ENCODE measurements at regions of chr1 and their contacts with region 1.

Region 1: GRCh38 chr1:222739465-222739864 is 2.5 kb downstream of the FAM177B start:
- DNase-seq: no peak
- ATAC-seq: peak; percentile 40
- H3K4me3 Mint-ChIP-seq: no peak overlapping the region
- H3K27ac Mint-ChIP-seq: no peak overlapping the region
- H3K4me1 Mint-ChIP-seq: peaks cover 43% of the 10 kb centered on the region
- H3K27me3 Mint-ChIP-seq: no peaks in the 10 kb centered on the region
- CTCF ChIP-seq: no peak

Region 2: DNA sequence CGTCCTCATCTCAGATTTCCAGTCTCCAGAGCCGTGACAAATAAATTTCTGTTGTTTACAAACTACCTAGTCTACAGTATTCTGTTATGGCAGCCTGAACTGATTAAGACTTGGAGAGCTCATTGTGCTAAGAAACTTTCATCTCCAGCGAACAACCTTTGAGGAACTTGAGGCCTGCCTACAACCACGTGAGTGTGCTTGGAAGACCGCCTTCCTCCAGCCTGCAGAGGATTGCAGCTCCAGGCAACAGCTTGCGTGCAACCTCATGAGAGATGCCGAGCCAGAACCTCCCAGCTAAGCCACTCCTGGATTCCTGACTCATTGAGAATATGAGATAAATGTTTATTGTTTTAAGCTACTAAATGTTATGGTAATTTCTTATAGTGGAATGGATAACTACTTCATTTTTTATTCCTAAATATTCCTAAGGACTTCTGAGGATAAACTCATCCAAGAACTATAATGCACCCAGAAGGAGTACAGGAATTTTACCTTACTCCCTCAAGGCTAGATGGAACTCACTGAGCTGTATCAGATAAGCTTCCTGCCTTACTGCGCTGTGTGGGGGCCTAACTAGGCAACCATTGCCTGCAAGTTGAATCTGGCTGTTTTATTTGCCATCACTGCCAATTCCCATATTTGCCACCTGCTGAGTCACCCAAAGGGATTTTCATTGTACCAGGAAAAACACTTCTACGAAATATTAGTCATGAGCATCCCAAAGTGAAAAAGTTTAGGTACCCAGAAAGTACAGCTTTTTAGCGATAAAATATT is 15.1 kb after region 1 on chr1:
- CTCF ChIA-PET with region 1: interaction called, 19 read pairs
- POLR2A ChIA-PET with region 1: interaction called, 16 read pairs
- intact Hi-C with region 1: no loop called
- DNase-seq: no peak
- ATAC-seq: no peak
- H3K4me3 Mint-ChIP-seq: no peak overlapping the region
- H3K27ac Mint-ChIP-seq: peak overlapping the region; percentile 61
- H3K4me1 Mint-ChIP-seq: peaks cover 65% of the 10 kb centered on the region
- H3K27me3 Mint-ChIP-seq: no peaks in the 10 kb centered on the region
- CTCF ChIP-seq: no peak

Region 3: DNA sequence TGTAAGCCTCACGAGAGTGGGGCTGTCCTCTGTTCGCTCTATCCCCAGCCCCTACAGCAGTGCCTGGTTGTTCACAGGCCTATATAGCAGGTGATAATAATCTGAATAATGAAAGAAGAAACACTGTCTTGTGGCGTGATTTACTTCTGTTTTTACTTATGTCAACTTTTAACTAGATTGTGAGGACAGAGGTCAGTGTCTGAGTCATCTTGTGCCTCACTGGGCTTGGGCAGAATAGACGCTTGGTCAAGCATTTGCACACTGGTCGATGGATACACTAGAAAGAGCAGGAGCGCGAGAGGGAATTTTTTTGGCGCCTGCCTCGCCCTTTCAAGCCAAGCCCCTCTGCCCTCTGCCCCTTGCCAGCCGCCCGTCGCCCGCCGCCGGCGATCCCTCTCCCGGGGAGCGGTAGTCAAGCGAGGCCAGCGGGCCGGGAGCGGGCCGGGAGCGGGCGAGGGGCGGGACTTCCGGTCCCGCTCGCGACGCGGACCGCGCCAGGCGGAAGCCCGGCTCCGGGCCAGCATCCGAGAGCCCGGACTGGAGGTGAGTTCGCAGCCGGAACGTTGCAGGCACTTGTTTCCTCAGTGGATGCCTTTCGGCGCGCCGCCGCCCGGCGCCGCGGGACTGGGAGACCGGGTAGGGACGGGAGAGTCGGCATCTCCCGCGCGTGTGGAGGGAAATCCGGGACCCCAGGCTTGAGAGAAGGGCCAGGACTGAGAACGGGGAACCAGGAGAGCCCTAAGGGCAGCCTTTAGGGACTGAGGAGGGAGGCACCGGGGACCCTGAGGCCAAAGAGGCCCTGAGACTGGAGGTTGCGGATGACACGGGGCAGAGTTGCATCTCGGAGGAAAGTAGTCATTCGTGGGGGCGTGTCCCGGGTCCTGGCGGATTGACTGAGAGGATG is 75.3 kb after region 1 on chr1 and contains the start of gene DISP1:
- CTCF ChIA-PET with region 1: interaction called, 4 read pairs
- POLR2A ChIA-PET with region 1: no interaction called
- intact Hi-C with region 1: loop called (anchors 2 kb)
- DNase-seq: peak; percentile 66
- ATAC-seq: peak; percentile 83
- H3K4me3 Mint-ChIP-seq: peak within 1 kb of the TSS; percentile 95
- H3K27ac Mint-ChIP-seq: peak within 1 kb of the TSS; percentile 95
- H3K4me1 Mint-ChIP-seq: peaks cover 43% of the 10 kb centered on the region
- H3K27me3 Mint-ChIP-seq: peaks cover 4% of the 10 kb centered on the region
- CTCF ChIP-seq: no peak
- total RNA-seq, gene DISP1: 4.5 and 5.1 TPM in 2 replicates

Region 4: DNA sequence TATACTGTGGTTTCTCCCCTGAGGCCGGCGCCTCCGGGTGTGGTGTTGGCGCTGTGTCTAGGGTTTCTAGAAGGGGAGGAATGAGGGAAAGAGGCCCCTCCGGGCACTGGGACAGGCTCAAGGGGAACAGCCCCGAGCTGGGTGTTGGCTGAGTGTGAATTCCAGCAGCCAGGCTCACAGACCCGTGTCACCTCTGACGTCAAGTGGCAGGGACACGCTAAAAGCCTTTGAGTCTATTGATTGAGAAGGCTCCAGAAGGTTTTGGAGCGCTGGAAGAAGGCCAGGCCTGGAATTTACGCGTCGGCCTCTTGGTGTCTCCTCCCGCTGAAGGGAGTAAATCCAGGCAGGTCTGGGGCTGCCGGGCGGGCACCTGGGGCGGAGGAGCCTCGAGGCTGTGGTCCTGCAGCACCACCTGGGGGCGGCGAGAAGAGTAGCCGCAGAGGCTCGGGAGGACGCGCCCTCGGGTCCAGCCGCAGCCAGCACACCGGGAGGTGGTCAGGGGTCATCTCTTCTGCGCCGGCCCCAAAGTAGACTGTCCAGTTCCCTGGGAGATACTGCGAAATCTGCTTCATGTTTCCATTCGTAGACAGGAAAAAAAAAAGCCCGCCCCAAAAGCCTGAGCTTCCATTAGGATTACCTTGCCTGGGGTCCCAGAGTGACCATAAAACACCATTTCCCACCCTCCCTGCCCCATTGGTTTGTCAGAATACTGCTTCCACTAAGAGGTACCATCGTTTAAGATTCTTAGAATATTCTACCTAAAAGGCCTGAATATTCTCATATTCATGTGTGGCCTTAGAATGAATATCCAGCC is 341.9 kb after region 1 on chr1:
- CTCF ChIA-PET with region 1: interaction called, 16 read pairs
- POLR2A ChIA-PET with region 1: no interaction called
- intact Hi-C with region 1: loop called (anchors 1 kb)
- DNase-seq: peak; percentile 71
- ATAC-seq: peak; percentile 99
- H3K4me3 Mint-ChIP-seq: peak overlapping the region; percentile 83
- H3K27ac Mint-ChIP-seq: peak overlapping the region; percentile 80
- H3K4me1 Mint-ChIP-seq: peaks cover 3% of the 10 kb centered on the region
- H3K27me3 Mint-ChIP-seq: peaks cover 5% of the 10 kb centered on the region
- CTCF ChIP-seq: peak; percentile 92

Region 5: GRCh38 chr1:223087291-223088255 is 348.1 kb after region 1 on chr1:
- CTCF ChIA-PET with region 1: interaction called, 23 read pairs
- POLR2A ChIA-PET with region 1: interaction called, 3 read pairs
- intact Hi-C with region 1: no loop called
- DNase-seq: no peak
- ATAC-seq: no peak
- H3K4me3 Mint-ChIP-seq: no peak overlapping the region
- H3K27ac Mint-ChIP-seq: no peak overlapping the region
- H3K4me1 Mint-ChIP-seq: no peaks in the 10 kb centered on the region
- H3K27me3 Mint-ChIP-seq: peaks cover 1% of the 10 kb centered on the region
- CTCF ChIP-seq: no peak

Region 6: GRCh38 chr1:223123011-223123610 is 383.6 kb after region 1 on chr1:
- CTCF ChIA-PET with region 1: interaction called, 8 read pairs
- POLR2A ChIA-PET with region 1: no interaction called
- intact Hi-C with region 1: loop called (anchors 2 kb)
- DNase-seq: no peak
- ATAC-seq: no peak
- H3K4me3 Mint-ChIP-seq: peak overlapping the region; percentile 36
- H3K27ac Mint-ChIP-seq: no peak overlapping the region
- H3K4me1 Mint-ChIP-seq: peaks cover 8% of the 10 kb centered on the region
- H3K27me3 Mint-ChIP-seq: peaks cover 7% of the 10 kb centered on the region
- CTCF ChIP-seq: no peak